ENCODE measurements at regions of chr18 and their contacts with region 1.

Region 1: GRCh38 chr18:57561728-57562423 is 24.6 kb downstream of the FECH start:
- DNase-seq: no peak
- ATAC-seq: peak in 3 of 4 donors; percentile 28 to 44 (median 30)
- H3K4me3 ChIP-seq: no peak overlapping the region
- H3K27ac ChIP-seq: no peak overlapping the region
- H3K4me1 ChIP-seq: peaks cover 0 to 19% (median 0%) of the 10 kb centered on the region in 12 donors
- H3K27me3 ChIP-seq: no peaks in the 10 kb centered on the region
- CTCF ChIP-seq: peak; percentile 77 to 93 (median 86)
- POLR2A ChIP-seq: no peak

Region 2: GRCh38 chr18:56645415-56646016 is 916.4 kb before region 1 on chr18:
- intact Hi-C with region 1: loop called in 1 of 10 experiments (anchors 10 kb)
- DNase-seq: no peak
- ATAC-seq: no peak
- H3K4me3 ChIP-seq: no peak overlapping the region
- H3K27ac ChIP-seq: no peak overlapping the region
- H3K4me1 ChIP-seq: peaks cover 0 to 5% (median 1%) of the 10 kb centered on the region in 12 donors
- H3K27me3 ChIP-seq: no peaks in the 10 kb centered on the region
- CTCF ChIP-seq: peak in 8 of 12 donors; percentile 23 to 50 (median 40)
- POLR2A ChIP-seq: no peak

Region 3: GRCh38 chr18:56743115-56743514 is 818.8 kb before region 1 on chr18:
- intact Hi-C with region 1: loop called in 8 of 10 experiments (anchors 2 to 5 kb)
- DNase-seq: no peak
- ATAC-seq: no peak
- H3K4me3 ChIP-seq: no peak overlapping the region
- H3K27ac ChIP-seq: no peak overlapping the region
- H3K4me1 ChIP-seq: peaks cover 0 to 28% (median 6%) of the 10 kb centered on the region in 12 donors
- H3K27me3 ChIP-seq: no peaks in the 10 kb centered on the region
- CTCF ChIP-seq: no peak
- POLR2A ChIP-seq: no peak

Region 4: DNA sequence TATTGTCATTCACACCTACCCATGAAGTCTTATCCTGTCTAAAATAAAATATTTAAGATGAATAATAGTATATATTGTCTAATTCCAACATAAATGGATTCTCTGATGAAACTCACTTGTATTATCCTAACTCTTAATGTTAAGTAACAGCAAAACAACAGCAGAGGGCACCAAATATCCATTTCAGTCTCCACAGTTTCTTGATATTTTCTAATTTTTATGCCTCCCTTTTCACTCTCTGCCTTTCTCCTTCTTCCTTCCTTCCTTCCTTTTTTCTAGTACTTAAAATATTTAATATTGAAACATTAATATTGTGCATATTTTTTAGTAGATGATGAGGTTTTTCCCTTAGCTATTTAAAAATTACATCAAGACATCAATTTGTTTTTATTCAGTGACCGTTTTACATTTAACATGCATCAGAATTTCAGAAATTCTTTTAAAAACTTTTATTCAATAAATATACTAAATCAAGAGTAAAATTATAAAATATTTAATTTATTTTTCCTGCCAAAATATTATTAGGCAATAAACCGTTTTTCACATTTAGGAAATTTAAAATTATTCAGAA is 813.1 kb before region 1 on chr18:
- intact Hi-C with region 1: loop called (anchors 2 to 10 kb)
- DNase-seq: no peak
- ATAC-seq: no peak
- H3K4me3 ChIP-seq: no peak overlapping the region
- H3K27ac ChIP-seq: no peak overlapping the region
- H3K4me1 ChIP-seq: peaks cover 0 to 28% (median 5%) of the 10 kb centered on the region in 12 donors
- H3K27me3 ChIP-seq: no peaks in the 10 kb centered on the region
- CTCF ChIP-seq: peak; percentile 43 to 78 (median 68)
- POLR2A ChIP-seq: no peak

Region 5: GRCh38 chr18:56756966-56757365 is 804.9 kb before region 1 on chr18:
- intact Hi-C with region 1: loop called in 2 of 10 experiments (anchors 5 to 10 kb)
- DNase-seq: peak in 2 of 5 donors; percentile 9 to 34
- ATAC-seq: peak in 3 of 4 donors; percentile 43 to 71 (median 54)
- H3K4me3 ChIP-seq: no peak overlapping the region
- H3K27ac ChIP-seq: no peak overlapping the region
- H3K4me1 ChIP-seq: peaks cover 0 to 11% (median 4%) of the 10 kb centered on the region in 12 donors
- H3K27me3 ChIP-seq: no peaks in the 10 kb centered on the region
- CTCF ChIP-seq: no peak
- POLR2A ChIP-seq: no peak

Region 6: DNA sequence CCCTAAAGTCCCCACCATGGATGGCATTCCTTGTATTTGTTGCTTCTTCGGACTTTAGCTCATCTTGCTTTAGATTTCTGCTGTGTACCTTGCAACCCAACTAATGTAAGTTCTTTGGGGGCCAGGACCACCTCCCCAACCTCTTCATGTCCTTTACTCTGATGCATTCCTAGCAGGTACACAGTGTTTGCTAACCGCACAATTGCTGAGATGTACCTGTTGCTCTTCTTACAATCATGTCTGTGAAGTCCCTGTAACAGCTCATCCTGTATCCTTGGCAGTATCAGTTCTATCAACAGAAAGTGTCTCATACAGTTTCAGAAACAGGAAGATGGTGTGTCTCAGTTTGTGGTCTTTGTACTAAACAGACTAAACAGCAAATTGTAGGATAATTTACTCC is 185.4 kb before region 1 on chr18:
- intact Hi-C with region 1: no loop called
- DNase-seq: no peak
- ATAC-seq: no peak
- H3K4me3 ChIP-seq: no peak overlapping the region
- H3K27ac ChIP-seq: no peak overlapping the region
- H3K4me1 ChIP-seq: no peaks in the 10 kb centered on the region
- H3K27me3 ChIP-seq: peaks cover 0 to 7% (median 0%) of the 10 kb centered on the region in 9 donors
- CTCF ChIP-seq: no peak
- POLR2A ChIP-seq: no peak

Measured in heart left ventricle (tissue), 16 donors.